Heart right ventricle (tissue), 16 donors: ENCODE measurements at regions of chr1 and their contacts with region 1.

Region 1: GRCh38 chr1:26787706-26788514 is at the start of gene PIGV:
- DNase-seq: peak; percentile 87 to 92
- ATAC-seq: peak; percentile 86 to 92 (median 90)
- H3K4me3 ChIP-seq: peak within 1 kb of the TSS; percentile 57 to 83 (median 70)
- H3K27ac ChIP-seq: peak within 1 kb of the TSS; percentile 97 to 100 (median 99)
- H3K4me1 ChIP-seq: peaks cover 25 to 84% (median 74%) of the 10 kb centered on the region in 9 donors
- H3K27me3 ChIP-seq: no peaks in the 10 kb centered on the region
- CTCF ChIP-seq: peak in 3 of 9 donors; percentile 6 to 27 (median 24)
- total RNA-seq, gene PIGV: 2.7 to 7.5 (median 4.6) TPM

Region 2: GRCh38 chr1:26677306-26678115 is 110.4 kb before region 1 on chr1:
- intact Hi-C with region 1: loop called in 3 of 10 experiments (anchors 1 to 5 kb)
- DNase-seq: peak; percentile 63 to 77
- ATAC-seq: peak; percentile 88 to 100 (median 95)
- H3K4me3 ChIP-seq: peak overlapping the region in 6 of 10 donors; percentile 6 to 31 (median 18)
- H3K27ac ChIP-seq: peak overlapping the region in 4 of 10 donors; percentile 21 to 51 (median 38)
- H3K4me1 ChIP-seq: peaks cover 0 to 21% (median 11%) of the 10 kb centered on the region in 9 donors
- H3K27me3 ChIP-seq: no peaks in the 10 kb centered on the region
- CTCF ChIP-seq: peak; percentile 39 to 77 (median 63)

Region 3: GRCh38 chr1:26705788-26706311 is 82.1 kb before region 1 on chr1:
- intact Hi-C with region 1: loop called in 1 of 10 experiments (anchors 5 kb)
- DNase-seq: no peak
- ATAC-seq: peak in 3 of 8 donors; percentile 8 to 19 (median 18)
- H3K4me3 ChIP-seq: no peak overlapping the region
- H3K27ac ChIP-seq: peak overlapping the region in 6 of 10 donors; percentile 20 to 57 (median 50)
- H3K4me1 ChIP-seq: peaks cover 14 to 90% (median 77%) of the 10 kb centered on the region in 9 donors
- H3K27me3 ChIP-seq: no peaks in the 10 kb centered on the region
- CTCF ChIP-seq: no peak

Region 4: GRCh38 chr1:26733982-26734381 is 53.9 kb before region 1 on chr1:
- intact Hi-C with region 1: loop called in 1 of 10 experiments (anchors 5 kb)
- DNase-seq: no peak
- ATAC-seq: peak in 1 of 8 donors; percentile 15
- H3K4me3 ChIP-seq: no peak overlapping the region
- H3K27ac ChIP-seq: peak overlapping the region in 1 of 10 donors; percentile 31
- H3K4me1 ChIP-seq: peaks cover 0 to 63% (median 44%) of the 10 kb centered on the region in 9 donors
- H3K27me3 ChIP-seq: no peaks in the 10 kb centered on the region
- CTCF ChIP-seq: no peak

Region 5: GRCh38 chr1:26754086-26754874 is 33.6 kb before region 1 on chr1:
- intact Hi-C with region 1: loop called in 1 of 10 experiments (anchors 5 kb)
- DNase-seq: no peak
- ATAC-seq: no peak
- H3K4me3 ChIP-seq: no peak overlapping the region
- H3K27ac ChIP-seq: peak overlapping the region in 5 of 10 donors; percentile 11 to 73 (median 67)
- H3K4me1 ChIP-seq: peaks cover 20 to 77% (median 58%) of the 10 kb centered on the region in 9 donors
- H3K27me3 ChIP-seq: no peaks in the 10 kb centered on the region
- CTCF ChIP-seq: no peak